ENCODE measurements at regions of chr2 and their contacts with region 1.

Region 1: GRCh38 chr2:43024515-43025011 is 201.8 kb downstream of the ZFP36L2 start:
- DNase-seq: peak; percentile 46 to 93 (median 77)

Region 2: GRCh38 chr2:42944779-42945415 is 79.7 kb before region 1 on chr2:
- intact Hi-C with region 1: loop called (anchors 2 kb)
- DNase-seq: peak in 1 of 10 donors; percentile 64

Region 3: DNA sequence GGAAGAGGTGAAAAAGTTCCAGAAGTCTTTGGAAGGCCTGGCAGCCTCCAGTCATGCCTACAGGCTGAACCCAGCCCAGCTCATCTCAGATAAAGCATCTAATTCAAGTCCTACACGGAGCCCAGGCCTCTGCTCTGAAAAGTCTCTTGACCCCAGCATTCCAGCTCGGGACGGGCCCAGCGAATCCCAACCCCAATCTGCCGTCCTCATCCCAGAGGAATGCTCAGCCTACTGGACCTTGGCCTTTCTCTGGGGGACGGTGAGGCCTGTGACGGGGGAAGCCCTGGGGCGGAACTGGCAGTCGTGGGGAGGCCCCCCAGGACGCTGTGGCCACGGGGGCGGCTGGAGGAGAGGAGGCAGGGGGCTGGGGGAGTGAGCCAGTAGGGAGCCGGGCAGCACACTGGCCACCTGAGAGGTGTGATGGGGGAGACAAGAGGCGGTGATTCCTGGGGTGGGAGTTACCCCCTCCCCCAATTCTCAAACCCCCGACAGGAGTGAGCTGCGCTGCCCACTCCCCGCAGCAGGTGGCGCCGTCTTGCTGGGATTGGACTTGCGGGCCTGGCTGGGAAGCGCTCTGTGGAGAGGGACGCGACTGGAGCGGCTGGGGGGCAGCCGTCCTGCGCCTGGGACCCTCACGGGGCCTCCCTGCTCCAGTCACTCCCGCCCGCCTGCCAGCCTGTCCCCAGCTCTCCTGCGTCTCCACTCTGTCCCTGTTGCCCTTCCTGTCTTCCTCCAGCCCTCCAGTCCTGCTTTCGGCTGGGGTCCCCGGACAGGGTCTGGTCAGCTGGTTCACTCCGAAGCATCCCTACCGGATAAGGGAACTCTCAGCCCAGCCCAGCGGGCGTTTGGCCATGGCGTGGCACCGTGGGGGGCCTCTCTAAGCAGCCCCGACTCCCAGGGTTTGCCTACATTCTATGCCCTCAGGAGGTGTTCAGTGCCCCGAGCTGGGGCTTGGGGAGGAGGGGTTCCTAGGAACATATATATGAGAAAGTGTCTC is 49.5 kb before region 1 on chr2:
- intact Hi-C with region 1: loop called (anchors 1 kb)
- DNase-seq: peak; percentile 53 to 96 (median 80)

Region 4: DNA sequence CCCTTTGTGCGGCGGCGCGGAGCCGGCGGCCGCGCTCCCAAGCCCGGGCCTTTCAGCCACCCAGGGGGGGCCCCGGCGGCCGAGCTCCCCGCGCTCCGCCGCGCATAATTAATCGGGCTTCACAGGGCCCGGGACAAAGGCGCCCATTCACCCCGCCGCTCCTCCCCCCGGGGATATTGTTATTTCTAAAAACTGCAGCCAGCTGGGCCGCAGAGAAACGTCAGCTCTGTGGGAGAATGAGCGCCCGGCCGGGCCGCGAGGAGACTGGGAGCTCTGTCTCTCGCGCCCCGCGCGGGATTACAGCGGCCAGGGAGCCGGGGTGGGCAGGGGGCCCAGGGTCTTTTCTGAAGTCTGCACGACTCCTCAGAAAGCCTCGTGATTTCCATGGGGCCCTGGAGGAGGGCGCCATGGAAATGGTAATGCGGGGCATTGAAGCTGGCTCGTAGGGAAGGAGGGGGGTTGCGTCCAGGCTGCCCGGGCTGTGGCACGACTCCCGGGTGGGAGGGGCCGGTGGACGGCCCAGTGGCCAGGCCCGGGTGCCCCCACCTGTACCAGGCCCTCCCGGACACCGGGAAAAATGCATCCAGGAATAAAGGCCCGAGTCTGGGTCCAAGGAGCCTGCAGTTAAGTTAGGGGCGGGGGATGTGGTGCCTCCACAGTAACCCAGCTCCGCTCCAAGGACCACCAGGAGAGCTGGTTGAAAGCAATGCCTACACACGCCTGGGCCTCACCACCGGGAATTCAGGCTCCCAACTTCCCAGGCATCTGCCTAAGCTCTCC is 76.5 kb after region 1 on chr2:
- intact Hi-C with region 1: loop called (anchors 2 kb)
- DNase-seq: peak; percentile 86 to 99 (median 92)

Region 5: DNA sequence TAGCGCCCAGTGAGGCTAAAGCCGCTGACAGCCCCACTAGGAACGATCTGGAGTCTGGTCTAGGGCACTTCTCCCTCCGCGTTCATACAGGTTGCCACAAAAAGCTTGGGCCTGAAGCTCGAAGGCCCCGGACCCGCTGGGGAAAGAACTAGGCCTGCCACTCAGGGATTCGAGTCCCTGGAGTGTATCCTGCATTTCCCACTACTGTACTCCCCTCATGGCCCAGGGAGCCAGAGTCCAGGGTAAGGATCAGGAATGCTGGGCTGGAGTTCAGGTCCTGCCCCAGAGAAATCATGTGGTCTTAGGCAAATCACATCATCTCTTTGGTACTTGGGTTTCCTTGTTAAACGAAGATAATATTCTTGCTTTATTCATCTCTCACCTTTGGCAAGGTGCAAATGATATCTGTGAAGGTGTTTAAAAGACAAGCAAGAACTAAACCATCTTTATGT is 203.3 kb after region 1 on chr2:
- intact Hi-C with region 1: loop called (anchors 1 kb)
- DNase-seq: no peak

Region 6: DNA sequence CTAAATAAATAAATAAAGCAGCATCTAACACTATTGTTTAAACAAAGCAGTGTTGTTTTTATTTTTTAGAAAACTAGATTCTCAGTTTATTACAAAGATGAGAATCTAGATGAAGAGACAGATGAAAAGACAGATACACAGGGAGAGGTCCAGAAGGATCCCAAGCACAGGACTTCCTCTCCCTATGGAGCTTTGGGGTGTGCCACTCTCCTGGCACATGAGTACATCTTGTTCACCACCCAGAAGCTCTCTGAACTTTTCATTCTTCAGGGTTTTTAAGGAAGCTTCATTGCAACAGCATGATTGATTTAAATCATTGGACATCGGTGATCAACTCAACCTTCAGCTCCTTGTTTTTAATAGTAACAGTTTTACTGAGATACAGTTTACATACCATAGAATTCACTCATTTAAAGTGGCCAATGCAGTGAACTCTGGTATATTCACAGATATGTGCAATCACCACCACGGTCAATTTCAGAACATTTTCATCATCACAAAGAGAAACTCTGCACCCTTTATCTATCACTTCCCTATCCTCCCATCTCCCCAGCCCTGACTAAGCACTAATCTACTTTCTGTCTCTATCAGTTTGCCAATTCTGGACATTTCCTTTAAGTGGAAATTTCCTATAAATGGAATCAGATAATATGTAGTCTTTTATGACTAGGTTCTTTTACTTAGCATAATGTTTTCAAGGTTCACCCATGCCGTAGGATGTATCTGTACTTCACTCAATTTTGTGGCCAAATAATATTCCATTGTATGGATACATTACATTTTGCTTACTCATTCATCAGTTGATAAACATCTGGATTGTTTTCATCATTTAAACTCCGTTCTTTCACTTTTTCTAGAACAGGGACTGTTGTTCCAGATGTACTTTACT is 264.1 kb after region 1 on chr2:
- intact Hi-C with region 1: no loop called
- DNase-seq: no peak

Region 7: DNA sequence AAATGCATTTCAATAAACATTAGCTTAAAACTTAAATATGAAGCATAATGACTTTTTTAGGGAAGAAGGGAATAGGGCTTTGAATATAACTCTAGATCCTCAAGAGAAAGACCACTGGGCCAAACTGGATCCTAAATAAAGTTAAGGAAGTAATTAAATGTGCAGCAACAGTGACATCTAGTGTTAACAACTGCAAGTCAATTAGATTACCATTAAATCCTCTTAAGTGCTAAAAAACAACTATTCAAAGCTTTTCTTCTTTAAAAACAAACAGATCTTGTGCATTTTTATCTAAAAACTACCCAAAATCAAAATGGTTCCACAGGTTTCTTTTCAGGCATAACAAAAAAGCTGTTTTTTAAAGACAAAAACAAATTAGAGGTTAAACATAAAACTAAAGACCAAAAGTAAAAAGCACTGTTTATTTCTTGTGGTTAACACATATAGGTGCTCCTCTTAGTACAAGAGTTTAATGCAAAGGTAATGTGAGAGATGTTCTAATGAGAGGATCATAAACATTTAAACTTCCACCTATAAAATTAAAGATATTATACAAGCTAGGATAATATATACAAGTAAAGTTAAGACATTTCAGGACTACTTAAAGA is 459.9 kb after region 1 on chr2:
- intact Hi-C with region 1: loop called (anchors 5 kb)
- DNase-seq: no peak

Measured in posterior cingulate gyrus (tissue), 11 donors.